Panc1 (cell line): ENCODE measurements at regions of chr5 and their contacts with region 1.

Region 1: GRCh38 chr5:32753051-32753450 is 41.9 kb downstream of the NPR3 start:
- DNase-seq: no peak
- ATAC-seq: no peak
- H3K4me3 ChIP-seq: no peak overlapping the region
- H3K27ac ChIP-seq: no peak overlapping the region
- H3K4me1 ChIP-seq: no peaks in the 10 kb centered on the region
- H3K27me3 ChIP-seq: no peaks in the 10 kb centered on the region
- CTCF ChIP-seq: no peak

Region 2: GRCh38 chr5:32504989-32505596 is 248.0 kb before region 1 on chr5:
- CTCF ChIA-PET with region 1: no interaction called
- POLR2A ChIA-PET with region 1: no interaction called
- in situ Hi-C with region 1: no loop called
- intact Hi-C with region 1: no loop called
- DNase-seq: no peak
- ATAC-seq: no peak
- H3K4me3 ChIP-seq: no peak overlapping the region
- H3K27ac ChIP-seq: no peak overlapping the region
- H3K4me1 ChIP-seq: no peaks in the 10 kb centered on the region
- H3K27me3 ChIP-seq: peaks cover 4% of the 10 kb centered on the region; the same call in 1 of the 2 replicates
- CTCF ChIP-seq: no peak

Region 3: DNA sequence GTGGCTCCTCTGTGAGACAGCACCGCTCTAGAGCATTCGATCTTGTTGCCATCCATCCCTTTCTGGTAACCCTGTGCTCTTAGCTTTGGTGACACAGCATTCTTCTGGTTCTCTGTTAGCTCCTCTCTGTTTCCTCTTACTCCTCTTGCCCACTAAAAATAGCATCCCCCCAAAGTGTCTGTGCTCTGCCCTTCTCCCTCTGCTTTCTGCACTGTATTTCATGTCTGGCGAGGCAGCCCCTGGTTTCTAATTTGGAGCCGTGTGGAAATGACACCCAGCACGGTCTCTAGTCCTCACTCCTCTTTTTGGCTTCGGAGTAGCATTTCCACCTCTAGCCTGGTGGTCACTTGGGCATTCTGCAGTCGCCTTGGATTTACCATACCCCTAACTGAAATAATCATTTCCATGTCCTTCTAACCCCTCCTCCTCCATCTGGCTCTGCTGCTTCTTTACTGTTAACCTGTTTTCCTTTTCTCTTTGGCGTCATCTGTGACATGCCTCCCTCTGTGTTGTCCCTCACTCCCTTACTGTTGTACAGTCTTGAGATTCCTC is 18.1 kb before region 1 on chr5:
- CTCF ChIA-PET with region 1: no interaction called
- POLR2A ChIA-PET with region 1: no interaction called
- in situ Hi-C with region 1: no loop called
- intact Hi-C with region 1: no loop called
- DNase-seq: no peak
- ATAC-seq: no peak
- H3K4me3 ChIP-seq: no peak overlapping the region
- H3K27ac ChIP-seq: no peak overlapping the region
- H3K4me1 ChIP-seq: no peaks in the 10 kb centered on the region
- H3K27me3 ChIP-seq: no peaks in the 10 kb centered on the region
- CTCF ChIP-seq: no peak

Region 4: GRCh38 chr5:32887382-32887781 is 134.3 kb after region 1 on chr5:
- CTCF ChIA-PET with region 1: interaction called, 11 read pairs
- POLR2A ChIA-PET with region 1: no interaction called
- in situ Hi-C with region 1: no loop called
- intact Hi-C with region 1: no loop called
- DNase-seq: no peak
- ATAC-seq: no peak
- H3K4me3 ChIP-seq: no peak overlapping the region
- H3K27ac ChIP-seq: no peak overlapping the region
- H3K4me1 ChIP-seq: no peaks in the 10 kb centered on the region
- H3K27me3 ChIP-seq: no peaks in the 10 kb centered on the region
- CTCF ChIP-seq: no peak